Activated T-helper 2 cell treated with anti-CD3 and anti-CD28 coated beads, Interferon-gamma antibody, Interleukin-2, Interleukin-4, amounts not matched to agents 10 μg/mL and 5 μg/mL and 100 μg/mL, durations not matched to agents 14 hours and 24 hours and 36 hours (primary cell): ENCODE measurements at regions of chr7 and their contacts with region 1.

Region 1: GRCh38 chr7:131071786-131072504 is 255.7 kb upstream of the MKLN1 start:
- DNase-seq: no peak
- H3K4me3 Mint-ChIP-seq: no peak overlapping the region
- H3K27ac Mint-ChIP-seq: peak overlapping the region; percentile 36
- H3K4me1 Mint-ChIP-seq: peaks cover 32% of the 10 kb centered on the region
- H3K27me3 Mint-ChIP-seq: no peaks in the 10 kb centered on the region

Region 2: GRCh38 chr7:131090886-131091692 is 19.1 kb after region 1 on chr7:
- intact Hi-C with region 1: no loop called
- DNase-seq: no peak
- H3K4me3 Mint-ChIP-seq: no peak overlapping the region
- H3K27ac Mint-ChIP-seq: peak overlapping the region; percentile 9
- H3K4me1 Mint-ChIP-seq: peaks cover 6% of the 10 kb centered on the region
- H3K27me3 Mint-ChIP-seq: no peaks in the 10 kb centered on the region

Region 3: DNA sequence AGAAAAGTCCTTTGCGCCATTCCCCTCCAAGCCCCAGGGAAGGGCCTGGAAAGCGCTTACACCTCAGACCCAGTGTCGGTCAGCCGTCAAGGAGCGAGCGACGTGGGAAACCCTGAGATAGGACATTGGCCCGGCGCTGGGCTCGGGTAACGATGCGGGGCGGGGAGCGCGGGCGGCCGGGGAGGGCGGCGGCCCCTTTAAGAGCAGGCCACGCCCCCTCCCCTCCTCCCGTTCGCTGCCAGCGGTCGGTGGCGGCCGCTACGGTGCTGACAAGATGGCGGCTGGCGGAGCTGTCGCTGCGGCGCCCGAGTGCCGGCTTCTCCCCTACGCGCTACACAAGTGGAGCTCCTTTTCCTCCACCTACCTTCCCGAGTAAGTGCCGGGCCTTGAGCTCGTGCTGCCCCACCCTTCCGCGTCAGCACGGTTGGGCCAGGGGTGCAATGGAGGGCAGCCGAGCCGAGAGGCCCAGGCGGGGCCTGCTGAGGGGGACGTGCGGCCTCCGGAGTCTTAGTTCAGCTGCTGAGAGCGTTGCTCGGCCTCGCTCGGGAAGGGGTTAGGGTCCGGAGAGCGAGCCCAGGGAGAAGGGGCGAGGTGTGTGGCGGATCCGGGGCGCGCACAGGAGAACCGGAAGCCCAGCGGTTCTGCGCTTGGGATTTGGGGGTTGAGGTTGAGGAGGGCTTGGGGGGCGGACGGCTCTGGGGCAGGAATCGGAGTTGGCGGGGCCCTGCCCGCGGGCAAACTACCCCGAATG is 255.9 kb after region 1 on chr7 and contains the start of gene MKLN1:
- intact Hi-C with region 1: loop called (anchors 5 kb)
- DNase-seq: peak; percentile 85
- H3K4me3 Mint-ChIP-seq: peak within 1 kb of the TSS; percentile 94
- H3K27ac Mint-ChIP-seq: peak within 1 kb of the TSS; percentile 95
- H3K4me1 Mint-ChIP-seq: peaks cover 48% of the 10 kb centered on the region
- H3K27me3 Mint-ChIP-seq: no peaks in the 10 kb centered on the region
- total RNA-seq, gene MKLN1: 38.3 and 40.9 TPM in 2 replicates

Region 4: DNA sequence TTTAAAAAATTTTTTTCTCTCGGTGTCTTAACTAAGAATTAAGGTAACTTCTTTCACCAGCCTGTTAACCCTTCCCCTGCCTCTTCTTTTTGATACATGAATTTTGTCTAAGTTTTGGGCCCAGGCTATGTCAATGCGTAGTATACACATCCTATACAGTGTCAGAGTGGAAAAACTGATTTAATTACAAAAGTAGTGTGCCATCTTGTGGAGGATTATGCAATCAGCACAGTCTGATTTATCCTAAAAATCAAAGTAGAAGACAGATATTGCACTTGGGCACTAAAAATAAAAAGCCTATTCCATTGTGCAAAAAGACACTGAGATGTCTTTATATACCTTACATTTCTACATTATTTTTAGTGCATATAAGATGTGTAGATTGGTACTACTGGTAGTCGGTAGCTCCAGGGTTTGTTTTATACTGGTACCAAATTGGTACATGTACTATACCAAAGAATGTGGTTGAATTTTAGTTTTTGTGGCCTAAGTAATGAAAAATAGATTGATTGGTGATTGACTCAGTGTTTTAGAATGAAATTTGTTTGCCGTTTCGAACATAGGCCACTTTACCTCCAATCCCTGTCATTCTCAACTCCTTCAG is 352.4 kb after region 1 on chr7:
- intact Hi-C with region 1: loop called (anchors 1 kb)
- DNase-seq: no peak
- H3K4me3 Mint-ChIP-seq: no peak overlapping the region
- H3K27ac Mint-ChIP-seq: no peak overlapping the region
- H3K4me1 Mint-ChIP-seq: peaks cover 5% of the 10 kb centered on the region
- H3K27me3 Mint-ChIP-seq: no peaks in the 10 kb centered on the region

Region 5: GRCh38 chr7:131513245-131514061 is 441.5 kb after region 1 on chr7:
- intact Hi-C with region 1: loop called (anchors 1 kb)
- DNase-seq: peak; percentile 69
- H3K4me3 Mint-ChIP-seq: no peak overlapping the region
- H3K27ac Mint-ChIP-seq: peak overlapping the region; percentile 2
- H3K4me1 Mint-ChIP-seq: peaks cover 14% of the 10 kb centered on the region
- H3K27me3 Mint-ChIP-seq: peaks cover 7% of the 10 kb centered on the region